Ovary (tissue), 10 donors: ENCODE measurements at regions of chr3 and their contacts with region 1.

Region 1: DNA sequence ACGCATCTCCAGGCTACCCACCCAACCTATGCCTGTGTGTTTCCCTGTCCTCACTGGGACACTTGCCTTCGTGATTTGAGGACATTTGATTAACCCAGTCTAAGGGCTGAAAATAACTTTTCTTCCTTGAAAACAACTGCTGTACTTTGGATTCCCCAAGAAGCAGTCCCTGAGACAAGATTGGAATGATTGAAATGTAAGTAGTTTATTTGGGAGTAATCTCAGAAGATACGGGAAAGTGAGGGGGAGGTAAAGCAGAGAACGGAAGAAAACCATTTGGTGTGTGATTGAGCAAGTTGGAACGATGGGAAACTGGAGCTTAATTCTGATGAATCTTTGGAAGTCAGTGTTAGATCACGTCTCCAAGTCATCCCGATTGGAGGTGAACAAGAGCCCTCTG is 143.8 kb upstream of the LMCD1 start:
- DNase-seq: no peak
- H3K4me3 ChIP-seq: no peak overlapping the region
- H3K27ac ChIP-seq: no peak overlapping the region
- H3K4me1 ChIP-seq: peaks cover 3% of the 10 kb centered on the region
- H3K27me3 ChIP-seq: no peaks in the 10 kb centered on the region
- CTCF ChIP-seq: no peak
- EP300 ChIP-seq: no peak
- POLR2A ChIP-seq: no peak

Region 2: GRCh38 chr3:8324740-8325139 is 33.1 kb before region 1 on chr3:
- intact Hi-C with region 1: no loop called
- DNase-seq: no peak
- H3K4me3 ChIP-seq: no peak overlapping the region
- H3K27ac ChIP-seq: no peak overlapping the region
- H3K4me1 ChIP-seq: no peaks in the 10 kb centered on the region
- H3K27me3 ChIP-seq: no peaks in the 10 kb centered on the region
- CTCF ChIP-seq: no peak
- EP300 ChIP-seq: no peak
- POLR2A ChIP-seq: no peak

Region 3: DNA sequence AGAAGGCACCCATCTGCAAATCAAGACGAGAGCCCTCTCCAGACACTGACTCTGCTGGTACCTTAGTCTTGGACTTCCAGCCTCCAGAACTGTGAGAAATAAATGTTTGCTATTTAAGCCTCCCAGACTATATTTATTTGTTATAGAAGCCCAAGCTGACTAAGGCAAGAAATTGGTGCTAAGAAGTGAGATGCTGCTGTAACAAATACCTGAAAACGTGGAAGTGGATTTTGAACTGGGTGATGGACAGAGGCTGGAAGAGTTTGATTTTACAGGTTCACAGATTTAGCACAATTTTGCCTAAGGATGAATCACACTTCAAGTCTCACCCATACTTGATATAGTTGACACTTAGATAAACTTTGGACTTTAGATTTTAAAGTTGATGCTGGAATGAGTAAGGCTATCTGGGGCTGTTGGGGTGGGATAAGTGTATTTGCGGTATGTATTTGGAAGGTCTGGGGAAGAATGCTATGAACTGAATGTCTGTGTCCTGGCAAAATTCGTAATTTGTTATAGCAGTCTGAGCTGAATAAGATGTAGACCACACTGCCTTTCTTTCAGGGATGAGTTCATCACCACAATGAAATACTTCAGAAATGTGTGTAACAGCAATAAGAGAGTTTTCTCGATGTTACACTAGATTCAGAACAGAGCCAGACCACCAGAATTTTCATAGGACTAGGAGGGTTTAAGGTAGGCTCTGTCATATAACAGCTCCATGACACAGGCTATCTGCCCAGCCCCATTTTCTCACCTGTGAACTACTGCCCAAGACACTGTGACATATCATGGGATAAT is 23.2 kb after region 1 on chr3:
- intact Hi-C with region 1: loop called in 1 of 4 experiments (anchors 2 kb)
- DNase-seq: no peak
- H3K4me3 ChIP-seq: no peak overlapping the region
- H3K27ac ChIP-seq: no peak overlapping the region
- H3K4me1 ChIP-seq: no peaks in the 10 kb centered on the region
- H3K27me3 ChIP-seq: no peaks in the 10 kb centered on the region
- CTCF ChIP-seq: no peak
- EP300 ChIP-seq: no peak
- POLR2A ChIP-seq: no peak